ENCODE measurements at regions of chr17 and their contacts with region 1.

Region 1: GRCh38 chr17:28416703-28417311 is 10.8 kb upstream of the SLC46A1 start:
- DNase-seq: no peak
- ATAC-seq: peak; percentile 100
- H3K4me3 ChIP-seq: no peak overlapping the region
- H3K27ac ChIP-seq: no peak overlapping the region
- H3K4me1 ChIP-seq: no peaks in the 10 kb centered on the region
- H3K27me3 ChIP-seq: no peaks in the 10 kb centered on the region
- CTCF ChIP-seq: peak; percentile 84 to 91 (median 91)
- EP300 ChIP-seq: no peak
- POLR2A ChIP-seq: no peak
- RAD21 ChIP-seq: peak; percentile 70

Region 2: GRCh38 chr17:28228126-28228857 is 188.5 kb before region 1 on chr17:
- CTCF ChIA-PET with region 1: interaction called, 41 read pairs
- POLR2A ChIA-PET with region 1: no interaction called
- RAD21 ChIA-PET with region 1: interaction called, 7 read pairs
- SMC1A ChIA-PET with region 1: interaction called, 5 read pairs
- in situ Hi-C with region 1: no loop called
- intact Hi-C with region 1: no loop called
- DNase-seq: no peak
- ATAC-seq: peak; percentile 40; the same call in 2 of the 3 replicates
- H3K4me3 ChIP-seq: no peak overlapping the region
- H3K27ac ChIP-seq: no peak overlapping the region
- H3K4me1 ChIP-seq: no peaks in the 10 kb centered on the region
- H3K27me3 ChIP-seq: peaks cover 0 to 9% of the 10 kb centered on the region in 2 experiments; a peak in 1 of 4 replicates
- CTCF ChIP-seq: 0 out of 6 replicates have a peak, but pooled peaks of 1 of the 3 experiments have one; percentile 13
- EP300 ChIP-seq: no peak
- POLR2A ChIP-seq: no peak
- RAD21 ChIP-seq: no peak

Region 3: GRCh38 chr17:28313841-28314240 is 103.0 kb before region 1 on chr17:
- CTCF ChIA-PET with region 1: no interaction called
- POLR2A ChIA-PET with region 1: no interaction called
- RAD21 ChIA-PET with region 1: no interaction called
- SMC1A ChIA-PET with region 1: no interaction called
- in situ Hi-C with region 1: no loop called
- intact Hi-C with region 1: no loop called
- DNase-seq: no peak
- ATAC-seq: no peak
- H3K4me3 ChIP-seq: no peak overlapping the region
- H3K27ac ChIP-seq: no peak overlapping the region
- H3K4me1 ChIP-seq: no peaks in the 10 kb centered on the region; the same call in 1 of the 2 replicates
- H3K27me3 ChIP-seq: no peaks in the 10 kb centered on the region
- CTCF ChIP-seq: no peak
- EP300 ChIP-seq: no peak
- POLR2A ChIP-seq: no peak
- RAD21 ChIP-seq: no peak

Region 4: GRCh38 chr17:28357061-28357900 is 59.5 kb before region 1 on chr17 and contains the start of gene POLDIP2:
- CTCF ChIA-PET with region 1: interaction called, 29 read pairs
- POLR2A ChIA-PET with region 1: interaction called, 3 read pairs
- RAD21 ChIA-PET with region 1: interaction called, 5 read pairs
- SMC1A ChIA-PET with region 1: no interaction called
- in situ Hi-C with region 1: no loop called
- intact Hi-C with region 1: no loop called
- DNase-seq: peak; percentile 55
- ATAC-seq: peak; percentile 100
- H3K4me3 ChIP-seq: peak within 1 kb of the TSS; percentile 92
- H3K27ac ChIP-seq: peak within 1 kb of the TSS; percentile 79
- H3K4me1 ChIP-seq: peaks cover 2% of the 10 kb centered on the region; the same call in 1 of the 2 replicates
- H3K27me3 ChIP-seq: no peaks in the 10 kb centered on the region
- CTCF ChIP-seq: no peak
- EP300 ChIP-seq: no peak
- POLR2A ChIP-seq: peak; percentile 97
- RAD21 ChIP-seq: no peak
- polyA plus RNA-seq, gene POLDIP2: 22.8 to 36.9 TPM

Region 5: DNA sequence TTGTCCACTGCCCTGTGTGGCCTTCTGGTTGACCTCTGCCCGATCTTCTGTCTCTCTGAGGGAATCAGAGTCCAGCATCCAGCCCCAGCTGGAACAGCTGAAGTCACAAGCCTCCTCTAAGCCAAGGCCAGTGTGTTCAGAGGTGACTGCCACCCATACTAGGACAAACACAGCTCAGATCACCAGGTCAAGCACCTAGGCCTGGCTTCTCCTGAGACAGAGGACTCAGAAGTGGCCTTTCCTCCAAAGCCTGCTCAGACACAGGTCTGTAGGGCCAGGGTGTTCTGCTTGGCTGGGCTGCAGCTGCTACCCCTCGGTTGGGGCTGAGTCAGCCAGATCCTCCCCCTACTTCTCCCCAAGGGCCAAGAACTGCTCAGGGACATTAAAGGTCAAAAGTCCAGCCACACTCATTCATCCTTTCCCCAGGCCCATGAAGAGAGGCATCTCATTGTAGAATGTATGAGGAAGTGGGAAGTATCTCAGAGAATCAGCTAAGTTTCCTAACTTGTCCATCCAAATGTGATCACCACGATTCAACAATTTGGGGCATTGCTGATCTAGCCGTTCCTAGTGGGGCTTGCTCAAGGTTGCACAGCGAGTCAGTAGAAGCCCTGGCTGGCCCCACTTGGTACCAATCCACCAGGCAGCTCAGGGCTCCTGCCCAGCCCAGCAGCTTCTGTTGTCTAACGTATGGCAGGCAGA is 18.4 kb before region 1 on chr17:
- CTCF ChIA-PET with region 1: interaction called, 37 read pairs
- POLR2A ChIA-PET with region 1: no interaction called
- RAD21 ChIA-PET with region 1: interaction called, 3 read pairs
- SMC1A ChIA-PET with region 1: interaction called, 3 read pairs
- in situ Hi-C with region 1: no loop called
- intact Hi-C with region 1: no loop called
- DNase-seq: no peak
- ATAC-seq: peak; percentile 85
- H3K4me3 ChIP-seq: no peak overlapping the region
- H3K27ac ChIP-seq: no peak overlapping the region
- H3K4me1 ChIP-seq: no peaks in the 10 kb centered on the region; the same call in 1 of the 2 replicates
- H3K27me3 ChIP-seq: no peaks in the 10 kb centered on the region
- CTCF ChIP-seq: no peak
- EP300 ChIP-seq: no peak
- POLR2A ChIP-seq: no peak; the same call in 1 of the 2 replicates
- RAD21 ChIP-seq: no peak

Region 6: GRCh38 chr17:28540231-28540630 is 123.4 kb after region 1 on chr17:
- CTCF ChIA-PET with region 1: no interaction called
- POLR2A ChIA-PET with region 1: no interaction called
- RAD21 ChIA-PET with region 1: no interaction called
- SMC1A ChIA-PET with region 1: no interaction called
- in situ Hi-C with region 1: no loop called
- intact Hi-C with region 1: loop called (anchors 5 kb)
- DNase-seq: no peak
- ATAC-seq: no peak
- H3K4me3 ChIP-seq: no peak overlapping the region
- H3K27ac ChIP-seq: no peak overlapping the region
- H3K4me1 ChIP-seq: no peaks in the 10 kb centered on the region
- H3K27me3 ChIP-seq: no peaks in the 10 kb centered on the region
- CTCF ChIP-seq: no peak
- EP300 ChIP-seq: no peak
- POLR2A ChIP-seq: no peak
- RAD21 ChIP-seq: no peak

Measured in GM12878 (cell line).